H1 (cell line): ENCODE measurements at regions of chr3 and their contacts with region 1.

Region 1: GRCh38 chr3:129992781-129993180 is 18.3 kb downstream of the TRH start:
- DNase-seq: peak in 1 of 2 experiments; percentile 52
- H3K4me3 ChIP-seq: no peak overlapping the region
- H3K27ac ChIP-seq: no peak overlapping the region
- H3K4me1 ChIP-seq: no peaks in the 10 kb centered on the region
- H3K27me3 ChIP-seq: peaks cover 0 to 3% (median 1%) of the 10 kb centered on the region in 4 experiments; a peak in 5 of 7 replicates
- CTCF ChIP-seq: peak; percentile 36 to 67 (median 50)
- EP300 ChIP-seq: no peak
- POLR2A ChIP-seq: no peak
- RAD21 ChIP-seq: peak; percentile 20 to 26; a peak in 2 of 4 replicates

Region 2: GRCh38 chr3:129975038-129975704 is 17.6 kb before region 1 on chr3:
- CTCF ChIA-PET with region 1: interaction called, 61 read pairs
- POLR2A ChIA-PET with region 1: interaction called, 3 read pairs
- DNase-seq: peak in 1 of 2 experiments; percentile 66
- H3K4me3 ChIP-seq: peak overlapping the region; percentile 3 to 55 (median 17); a peak in 3 of 8 replicates
- H3K27ac ChIP-seq: no peak overlapping the region
- H3K4me1 ChIP-seq: peaks cover 0 to 20% (median 11%) of the 10 kb centered on the region in 4 experiments; a peak in 5 of 7 replicates
- H3K27me3 ChIP-seq: peaks cover 63 to 96% (median 93%) of the 10 kb centered on the region in 4 experiments
- CTCF ChIP-seq: no peak
- EP300 ChIP-seq: no peak
- POLR2A ChIP-seq: no peak
- RAD21 ChIP-seq: no peak

Region 3: DNA sequence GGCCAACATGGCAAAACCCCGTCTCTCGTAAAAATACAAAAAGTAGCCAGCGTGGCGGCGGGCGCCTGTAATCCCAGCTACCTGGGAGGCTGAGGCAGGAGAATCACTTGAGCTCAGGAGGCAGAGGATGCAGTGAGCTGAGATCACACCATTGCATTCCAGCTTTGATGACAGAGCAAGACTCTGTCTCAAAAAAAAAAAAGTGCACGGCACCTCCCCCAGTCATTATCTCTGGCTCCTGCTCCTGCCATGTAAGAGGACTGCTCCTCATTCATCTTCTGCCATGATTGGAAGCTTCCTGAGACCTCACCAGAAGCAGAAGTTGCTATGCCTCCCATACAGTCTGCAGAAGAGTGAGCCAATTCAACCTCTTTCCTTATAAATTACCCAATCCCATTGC is 84.9 kb after region 1 on chr3:
- CTCF ChIA-PET with region 1: no interaction called
- POLR2A ChIA-PET with region 1: no interaction called
- DNase-seq: no peak
- H3K4me3 ChIP-seq: no peak overlapping the region
- H3K27ac ChIP-seq: no peak overlapping the region
- H3K4me1 ChIP-seq: no peaks in the 10 kb centered on the region
- H3K27me3 ChIP-seq: no peaks in the 10 kb centered on the region
- CTCF ChIP-seq: no peak
- EP300 ChIP-seq: no peak
- POLR2A ChIP-seq: no peak
- RAD21 ChIP-seq: no peak

Region 4: GRCh38 chr3:130111185-130111864 is 118.5 kb after region 1 on chr3:
- CTCF ChIA-PET with region 1: interaction called, 12 read pairs
- POLR2A ChIA-PET with region 1: no interaction called
- DNase-seq: peak; percentile 93 to 98
- H3K4me3 ChIP-seq: peak overlapping the region; percentile 62 to 88 (median 82)
- H3K27ac ChIP-seq: no peak overlapping the region; the same call in 1 of the 2 replicates
- H3K4me1 ChIP-seq: peaks cover 0 to 3% (median 0%) of the 10 kb centered on the region in 4 experiments; a peak in 1 of 7 replicates
- H3K27me3 ChIP-seq: no peaks in the 10 kb centered on the region
- CTCF ChIP-seq: no peak
- EP300 ChIP-seq: no peak
- POLR2A ChIP-seq: peak in 1 of 2 experiments; percentile 45; a peak in 1 of 3 replicates
- RAD21 ChIP-seq: no peak